ENCODE measurements at regions of chr6 and their contacts with region 1.

Region 1: DNA sequence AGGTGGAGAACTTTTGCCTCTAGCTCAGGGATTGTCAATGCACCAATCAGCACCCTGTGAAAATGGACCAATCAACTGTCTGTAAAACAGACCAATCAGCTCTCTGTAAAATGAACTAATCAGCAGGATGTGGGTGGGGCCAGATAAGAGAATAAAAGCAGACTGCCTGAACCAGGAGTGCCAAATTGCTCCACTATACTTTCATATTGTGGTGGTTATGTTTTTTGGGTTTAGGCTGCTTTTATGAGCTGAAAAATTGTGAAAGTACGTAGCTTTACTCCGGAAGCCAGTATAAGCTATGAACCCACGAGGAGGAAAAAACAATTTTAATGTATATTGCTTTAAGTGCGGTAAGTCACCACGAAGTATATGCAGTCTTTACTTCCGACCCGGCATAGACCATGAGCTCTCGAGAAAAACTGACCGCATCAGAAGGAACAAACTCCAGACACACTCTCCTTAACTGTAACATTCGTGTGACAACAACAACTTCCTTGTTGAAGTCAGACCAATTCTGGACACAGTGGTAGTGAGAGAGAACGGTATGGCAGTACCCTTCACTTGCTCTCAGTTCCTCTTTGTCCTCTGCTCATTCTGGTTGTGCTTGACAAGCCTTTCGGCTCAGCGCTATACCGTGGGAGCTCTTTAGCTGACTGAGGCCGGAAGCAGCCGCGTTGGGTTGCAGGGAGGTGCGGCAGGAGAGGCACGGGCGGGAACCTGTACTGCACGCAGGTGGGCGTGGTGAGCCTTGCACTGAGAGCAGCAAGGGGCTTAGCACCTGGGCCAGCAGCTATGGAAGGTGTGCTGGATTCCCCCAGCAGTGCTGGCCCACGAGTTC is 81.9 kb upstream of the E2F3 start:
- DNase-seq: peak; percentile 76
- H3K4me3 Mint-ChIP-seq: peak overlapping the region; percentile 81
- H3K27ac Mint-ChIP-seq: peak overlapping the region; percentile 97
- H3K4me1 Mint-ChIP-seq: peaks cover 20% of the 10 kb centered on the region
- H3K27me3 Mint-ChIP-seq: peaks cover 18% of the 10 kb centered on the region

Region 2: GRCh38 chr6:20279608-20280287 is 40.0 kb before region 1 on chr6:
- intact Hi-C with region 1: no loop called
- DNase-seq: no peak
- H3K4me3 Mint-ChIP-seq: no peak overlapping the region
- H3K27ac Mint-ChIP-seq: no peak overlapping the region
- H3K4me1 Mint-ChIP-seq: peaks cover 3% of the 10 kb centered on the region
- H3K27me3 Mint-ChIP-seq: peaks cover 45% of the 10 kb centered on the region

Region 3: DNA sequence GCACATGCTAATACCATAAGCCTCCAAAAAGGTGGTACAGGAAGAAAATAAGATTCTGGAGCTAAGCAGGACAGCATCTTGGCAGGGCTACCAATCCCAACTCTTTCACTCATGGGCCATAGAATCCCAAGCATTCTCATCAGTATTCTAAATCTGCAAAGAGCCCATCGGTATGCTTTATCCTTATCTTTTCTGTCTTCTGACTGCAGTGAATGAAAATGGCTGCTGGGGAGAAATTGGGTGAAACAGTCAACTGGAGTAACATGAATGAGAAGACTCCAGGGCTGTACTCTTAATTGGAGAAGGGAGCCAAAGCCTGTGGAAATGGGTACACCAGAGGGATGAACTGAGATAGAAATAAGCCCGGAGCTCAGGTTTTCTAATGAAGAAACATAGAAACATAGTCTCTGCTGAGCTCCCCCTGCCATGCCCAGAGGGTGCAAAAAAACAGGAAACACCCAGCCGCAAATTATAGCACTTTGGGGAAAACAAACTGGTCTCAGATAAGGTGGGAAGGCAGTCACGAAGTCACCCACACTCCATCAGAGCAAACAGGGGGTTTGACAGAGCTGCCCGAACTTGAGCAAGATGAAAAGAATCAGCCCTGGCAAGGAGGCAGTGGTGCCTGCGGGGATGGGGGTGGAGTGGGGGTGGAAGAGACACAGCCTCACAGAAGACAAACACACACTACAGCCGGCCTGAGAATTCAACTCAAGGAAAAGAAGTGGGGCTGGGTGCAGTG is 46.5 kb after region 1 on chr6:
- intact Hi-C with region 1: loop called (anchors 5 kb)
- DNase-seq: peak; percentile 34
- H3K4me3 Mint-ChIP-seq: peak overlapping the region; percentile 64
- H3K27ac Mint-ChIP-seq: peak overlapping the region; percentile 93
- H3K4me1 Mint-ChIP-seq: peaks cover 64% of the 10 kb centered on the region
- H3K27me3 Mint-ChIP-seq: no peaks in the 10 kb centered on the region

Region 4: DNA sequence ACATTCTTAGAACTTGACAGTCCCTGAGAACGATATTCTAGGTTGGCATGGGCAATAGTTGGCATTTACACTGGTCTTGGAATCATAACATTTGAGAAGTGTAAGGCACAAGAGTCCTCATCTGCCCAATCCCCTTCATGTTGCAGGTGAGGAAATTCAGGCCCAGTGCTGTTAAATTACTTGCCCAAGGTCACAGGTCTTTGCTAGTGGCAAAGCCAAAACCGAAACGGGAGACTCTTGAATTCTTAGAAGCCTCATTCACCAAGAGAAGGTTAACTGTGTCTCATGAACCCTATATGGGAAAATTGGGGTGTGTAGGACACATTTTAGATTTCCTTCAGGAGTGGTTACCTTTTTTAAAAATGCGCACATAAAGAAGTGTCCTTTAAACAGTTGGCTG is 89.1 kb after region 1 on chr6:
- intact Hi-C with region 1: no loop called
- DNase-seq: no peak
- H3K4me3 Mint-ChIP-seq: peak overlapping the region; percentile 15
- H3K27ac Mint-ChIP-seq: peak overlapping the region; percentile 92
- H3K4me1 Mint-ChIP-seq: peaks cover 66% of the 10 kb centered on the region
- H3K27me3 Mint-ChIP-seq: no peaks in the 10 kb centered on the region